ENCODE measurements at regions of chr5 and their contacts with region 1.

Region 1: GRCh38 chr5:157476702-157477408 is 16.8 kb downstream of the NIPAL4 start:
- DNase-seq: peak; percentile 75
- ATAC-seq: peak; percentile 69
- H3K4me3 ChIP-seq: no peak overlapping the region
- H3K27ac ChIP-seq: no peak overlapping the region
- H3K4me1 ChIP-seq: peaks cover 49% of the 10 kb centered on the region
- H3K27me3 ChIP-seq: no peaks in the 10 kb centered on the region
- CTCF ChIP-seq: peak; percentile 85
- EP300 ChIP-seq: no peak
- POLR2A ChIP-seq: no peak
- RAD21 ChIP-seq: peak; percentile 68

Region 2: DNA sequence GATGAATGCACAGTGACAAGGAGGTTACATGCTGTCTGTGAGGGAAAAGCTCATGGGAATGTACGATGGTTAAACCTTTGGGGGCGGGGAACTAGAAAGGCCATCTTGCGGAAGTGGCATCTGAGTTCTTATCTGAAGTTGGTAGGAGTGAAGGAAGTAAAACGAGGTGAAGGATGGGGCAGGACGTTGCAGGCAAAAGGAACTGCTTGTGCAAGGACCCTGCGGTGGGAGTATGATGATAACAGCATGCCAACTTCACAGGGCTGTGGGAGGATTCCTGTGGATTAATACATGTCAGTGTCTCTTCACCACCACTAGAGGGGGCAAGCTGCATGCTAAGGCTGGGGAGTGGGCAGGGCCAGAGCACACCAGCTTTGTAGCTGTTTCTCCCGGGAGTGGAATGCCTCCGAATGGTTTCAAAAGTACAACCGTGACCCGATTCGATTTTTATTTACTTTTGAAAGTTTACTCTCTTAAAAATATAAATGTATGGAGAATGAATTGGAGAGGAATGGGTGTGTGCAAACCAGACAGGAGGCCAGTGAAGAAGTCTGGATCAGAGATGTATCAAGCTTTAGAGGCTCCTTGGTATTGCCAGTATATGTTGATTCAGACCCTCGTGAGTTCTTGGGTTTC is 148.5 kb before region 1 on chr5:
- CTCF ChIA-PET with region 1: interaction called, 9 read pairs
- POLR2A ChIA-PET with region 1: no interaction called
- in situ Hi-C with region 1: no loop called
- intact Hi-C with region 1: loop called (anchors 1 kb)
- DNase-seq: peak; percentile 73
- ATAC-seq: peak; percentile 98
- H3K4me3 ChIP-seq: no peak overlapping the region; a peak in 1 of 6 replicates
- H3K27ac ChIP-seq: no peak overlapping the region
- H3K4me1 ChIP-seq: peaks cover 36% of the 10 kb centered on the region
- H3K27me3 ChIP-seq: no peaks in the 10 kb centered on the region
- CTCF ChIP-seq: peak; percentile 92
- EP300 ChIP-seq: no peak
- POLR2A ChIP-seq: no peak
- RAD21 ChIP-seq: peak; percentile 63

Region 3: GRCh38 chr5:157366741-157367674 is 109.8 kb before region 1 on chr5:
- CTCF ChIA-PET with region 1: interaction called, 3 read pairs
- POLR2A ChIA-PET with region 1: no interaction called
- in situ Hi-C with region 1: no loop called
- intact Hi-C with region 1: loop called (anchors 1 kb)
- DNase-seq: peak; percentile 28
- ATAC-seq: peak; percentile 71
- H3K4me3 ChIP-seq: no peak overlapping the region
- H3K27ac ChIP-seq: no peak overlapping the region
- H3K4me1 ChIP-seq: no peaks in the 10 kb centered on the region
- H3K27me3 ChIP-seq: no peaks in the 10 kb centered on the region
- CTCF ChIP-seq: peak; percentile 65
- EP300 ChIP-seq: no peak
- POLR2A ChIP-seq: no peak
- RAD21 ChIP-seq: peak; percentile 30; the same call in 1 of the 2 replicates

Region 4: DNA sequence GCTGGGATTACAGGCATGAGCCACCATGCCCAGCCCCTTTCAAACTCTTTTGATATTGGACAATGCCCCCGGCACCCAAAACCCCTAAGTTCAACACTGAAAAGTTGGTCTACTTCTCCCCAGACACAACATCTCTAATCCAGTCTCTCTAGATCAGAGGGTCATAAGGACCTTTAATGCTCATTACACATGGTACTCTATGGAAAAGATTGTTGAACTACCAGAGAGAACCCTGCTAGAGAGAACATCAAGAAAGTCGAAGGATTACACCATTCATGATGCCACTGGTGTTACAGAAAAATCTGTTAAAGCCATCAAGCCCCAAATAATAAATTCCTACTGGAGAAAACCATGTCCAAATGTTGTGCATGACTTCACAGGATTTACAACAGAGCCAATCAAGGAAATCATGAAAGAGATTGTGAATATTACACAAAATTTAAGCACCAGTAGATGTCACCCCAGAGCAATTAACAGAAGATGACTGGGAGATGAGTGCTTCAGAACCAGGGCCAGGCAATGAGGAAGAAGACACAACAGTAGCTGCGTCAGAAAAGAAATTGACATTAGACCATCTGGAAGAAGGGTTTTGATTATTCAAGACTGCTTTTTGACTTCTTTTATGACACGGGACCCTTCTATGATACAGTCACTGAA is 45.2 kb before region 1 on chr5:
- CTCF ChIA-PET with region 1: interaction called, 3 read pairs
- POLR2A ChIA-PET with region 1: no interaction called
- in situ Hi-C with region 1: no loop called
- intact Hi-C with region 1: loop called (anchors 2 kb)
- DNase-seq: peak; percentile 34
- ATAC-seq: peak; percentile 72
- H3K4me3 ChIP-seq: no peak overlapping the region
- H3K27ac ChIP-seq: no peak overlapping the region
- H3K4me1 ChIP-seq: no peaks in the 10 kb centered on the region
- H3K27me3 ChIP-seq: no peaks in the 10 kb centered on the region
- CTCF ChIP-seq: peak; percentile 66
- EP300 ChIP-seq: no peak
- POLR2A ChIP-seq: no peak
- RAD21 ChIP-seq: no peak

Region 5: GRCh38 chr5:157563373-157563928 is 86.6 kb after region 1 on chr5:
- CTCF ChIA-PET with region 1: no interaction called
- POLR2A ChIA-PET with region 1: no interaction called
- in situ Hi-C with region 1: no loop called
- intact Hi-C with region 1: no loop called
- DNase-seq: no peak
- ATAC-seq: no peak; the same call in 2 of the 3 replicates
- H3K4me3 ChIP-seq: no peak overlapping the region
- H3K27ac ChIP-seq: no peak overlapping the region
- H3K4me1 ChIP-seq: peaks cover 20% of the 10 kb centered on the region
- H3K27me3 ChIP-seq: no peaks in the 10 kb centered on the region; a peak in 1 of 5 replicates
- CTCF ChIP-seq: no peak
- EP300 ChIP-seq: no peak
- POLR2A ChIP-seq: no peak
- RAD21 ChIP-seq: no peak

Region 6: DNA sequence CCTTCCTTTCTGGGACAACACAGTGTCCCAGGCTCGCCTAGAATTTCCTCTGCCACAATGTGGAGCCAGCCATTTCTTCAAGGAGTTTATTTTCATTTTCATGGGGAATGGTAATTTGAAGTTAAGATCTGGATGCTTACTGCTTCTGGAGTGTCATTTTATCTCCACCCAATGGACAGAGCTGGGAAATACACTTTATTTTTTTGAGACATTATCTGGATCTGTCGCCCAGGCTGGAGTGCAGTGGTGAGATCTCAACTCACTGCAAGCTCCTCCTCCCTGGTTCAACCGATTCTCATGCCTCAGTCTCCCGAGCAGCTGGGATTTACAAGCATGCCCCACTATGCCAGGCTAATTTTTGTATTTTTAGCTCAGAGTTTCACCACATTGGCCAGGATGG is 241.7 kb after region 1 on chr5:
- CTCF ChIA-PET with region 1: no interaction called
- POLR2A ChIA-PET with region 1: no interaction called
- in situ Hi-C with region 1: no loop called
- intact Hi-C with region 1: loop called (anchors 1 kb)
- DNase-seq: peak; percentile 23
- ATAC-seq: peak; percentile 86
- H3K4me3 ChIP-seq: no peak overlapping the region
- H3K27ac ChIP-seq: no peak overlapping the region
- H3K4me1 ChIP-seq: no peaks in the 10 kb centered on the region
- H3K27me3 ChIP-seq: no peaks in the 10 kb centered on the region
- CTCF ChIP-seq: peak; percentile 75
- EP300 ChIP-seq: no peak
- POLR2A ChIP-seq: no peak
- RAD21 ChIP-seq: peak; percentile 30; the same call in 1 of the 2 replicates

Measured in HepG2 (cell line).